ENCODE measurements at regions of chr7 and their contacts with region 1.

Region 1: DNA sequence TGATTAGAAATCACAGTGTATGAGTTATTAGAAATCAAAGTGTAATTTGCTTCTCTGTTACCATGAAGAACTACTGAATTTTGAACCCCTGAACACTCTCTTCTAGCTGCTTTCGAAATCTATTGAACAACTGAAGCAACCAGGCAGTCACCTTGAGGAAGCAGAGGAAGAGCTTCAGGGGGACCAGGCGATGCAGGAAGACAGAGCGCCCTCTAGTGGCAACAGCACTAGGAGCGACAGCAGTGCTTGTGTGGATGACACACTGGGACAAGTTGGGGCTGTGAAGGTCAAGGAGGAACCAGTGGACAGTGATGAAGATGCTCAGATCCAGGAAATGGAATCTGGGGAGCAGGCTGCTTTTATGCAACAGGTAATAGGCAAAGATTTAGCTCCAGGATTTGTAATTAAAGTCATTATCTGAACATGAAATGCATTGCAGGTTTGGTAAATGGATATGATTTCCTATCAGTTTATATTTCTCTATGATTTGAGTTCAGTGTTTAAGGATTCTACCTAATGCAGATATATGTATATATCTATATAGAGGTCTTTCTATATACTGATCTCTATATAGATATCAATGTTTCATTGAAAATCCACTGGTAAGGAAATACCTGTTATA is 170.7 kb downstream of the HDAC9 start:
- DNase-seq: peak; percentile 9 to 76 (median 34)
- ATAC-seq: peak; percentile 44
- H3K4me3 ChIP-seq: no peak overlapping the region
- H3K4me3 Mint-ChIP-seq: no peak overlapping the region
- H3K27ac ChIP-seq: no peak overlapping the region
- H3K27ac Mint-ChIP-seq: no peak overlapping the region
- H3K4me1 ChIP-seq: no peaks in the 10 kb centered on the region
- H3K4me1 Mint-ChIP-seq: no peaks in the 10 kb centered on the region
- H3K27me3 ChIP-seq: no peaks in the 10 kb centered on the region
- H3K27me3 Mint-ChIP-seq: no peaks in the 10 kb centered on the region
- CTCF ChIP-seq: peak; percentile 76

Region 2: GRCh38 chr7:16891338-16891737 is 1774.9 kb before region 1 on chr7:
- CTCF ChIA-PET with region 1: no interaction called
- POLR2A ChIA-PET with region 1: no interaction called
- intact Hi-C with region 1: loop called in 1 of 2 experiments (anchors 5 kb)
- DNase-seq: peak in 4 of 14 experiments; percentile 31 to 50 (median 47)
- ATAC-seq: peak; percentile 59
- H3K4me3 ChIP-seq: no peak overlapping the region
- H3K4me3 Mint-ChIP-seq: no peak overlapping the region
- H3K27ac ChIP-seq: no peak overlapping the region
- H3K27ac Mint-ChIP-seq: no peak overlapping the region
- H3K4me1 ChIP-seq: no peaks in the 10 kb centered on the region
- H3K4me1 Mint-ChIP-seq: peaks cover 5% of the 10 kb centered on the region
- H3K27me3 ChIP-seq: no peaks in the 10 kb centered on the region
- H3K27me3 Mint-ChIP-seq: no peaks in the 10 kb centered on the region
- CTCF ChIP-seq: no peak

Region 3: GRCh38 chr7:18684916-18685315 is 18.7 kb after region 1 on chr7:
- CTCF ChIA-PET with region 1: no interaction called
- POLR2A ChIA-PET with region 1: no interaction called
- intact Hi-C with region 1: no loop called
- DNase-seq: no peak
- ATAC-seq: no peak
- H3K4me3 ChIP-seq: no peak overlapping the region
- H3K4me3 Mint-ChIP-seq: no peak overlapping the region
- H3K27ac ChIP-seq: no peak overlapping the region
- H3K27ac Mint-ChIP-seq: no peak overlapping the region
- H3K4me1 ChIP-seq: no peaks in the 10 kb centered on the region
- H3K4me1 Mint-ChIP-seq: no peaks in the 10 kb centered on the region
- H3K27me3 ChIP-seq: no peaks in the 10 kb centered on the region
- H3K27me3 Mint-ChIP-seq: no peaks in the 10 kb centered on the region
- CTCF ChIP-seq: no peak